ENCODE measurements at regions of chrX and their contacts with region 1.

Region 1: GRCh38 chrX:136496770-136497598 is at the start of gene HTATSF1:
- DNase-seq: peak; percentile 93
- H3K4me3 Mint-ChIP-seq: peak within 1 kb of the TSS; percentile 90
- H3K27ac Mint-ChIP-seq: peak within 1 kb of the TSS; percentile 94
- H3K4me1 Mint-ChIP-seq: peaks cover 18% of the 10 kb centered on the region
- H3K27me3 Mint-ChIP-seq: no peaks in the 10 kb centered on the region
- total RNA-seq, gene HTATSF1: 38.9 to 40.4 TPM

Region 2: DNA sequence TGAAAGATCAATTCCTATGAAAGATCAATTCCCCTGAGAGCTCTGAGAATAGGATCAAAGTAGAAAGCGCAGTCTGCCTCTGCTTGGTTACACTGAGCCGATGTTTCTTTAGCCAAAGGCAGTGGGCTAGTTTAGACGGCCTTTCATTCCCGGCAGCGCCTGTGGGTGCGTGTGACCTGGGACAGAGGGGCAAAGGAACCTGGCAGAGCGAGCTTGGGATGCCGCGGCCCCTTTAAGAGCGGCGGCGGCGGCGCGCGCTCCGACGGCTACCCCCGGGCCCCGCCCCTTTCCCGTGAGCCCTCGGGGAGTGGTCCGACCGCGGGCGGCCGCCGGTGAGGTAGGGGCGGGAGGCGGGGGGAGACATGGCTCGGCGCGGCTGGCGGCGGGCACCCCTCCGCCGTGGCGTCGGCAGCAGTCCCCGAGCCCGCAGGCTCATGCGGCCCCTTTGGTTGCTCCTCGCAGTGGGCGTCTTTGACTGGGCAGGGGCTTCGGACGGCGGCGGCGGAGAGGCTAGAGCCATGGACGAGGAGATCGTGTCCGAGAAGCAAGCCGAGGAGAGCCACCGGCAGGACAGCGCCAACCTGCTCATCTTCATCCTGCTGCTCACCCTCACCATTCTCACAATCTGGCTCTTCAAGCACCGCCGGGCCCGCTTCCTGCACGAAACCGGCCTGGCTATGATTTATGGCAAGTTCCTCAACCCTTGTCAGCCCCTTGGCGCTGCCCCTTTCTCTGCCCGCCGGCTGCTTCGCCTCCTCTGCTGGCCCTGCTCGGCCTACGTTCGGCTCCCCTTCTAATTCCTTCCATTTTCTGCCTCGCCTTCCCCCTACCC is 511.6 kb before region 1 on chrX and contains the start of gene SLC9A6:
- CTCF ChIA-PET with region 1: no interaction called
- intact Hi-C with region 1: loop called (anchors 1 kb)
- DNase-seq: peak; percentile 63
- H3K4me3 Mint-ChIP-seq: peak within 1 kb of the TSS; percentile 85
- H3K27ac Mint-ChIP-seq: peak within 1 kb of the TSS; percentile 77
- H3K4me1 Mint-ChIP-seq: peaks cover 50% of the 10 kb centered on the region
- H3K27me3 Mint-ChIP-seq: no peaks in the 10 kb centered on the region
- total RNA-seq, gene SLC9A6: 9.7 to 10.0 TPM

Region 3: DNA sequence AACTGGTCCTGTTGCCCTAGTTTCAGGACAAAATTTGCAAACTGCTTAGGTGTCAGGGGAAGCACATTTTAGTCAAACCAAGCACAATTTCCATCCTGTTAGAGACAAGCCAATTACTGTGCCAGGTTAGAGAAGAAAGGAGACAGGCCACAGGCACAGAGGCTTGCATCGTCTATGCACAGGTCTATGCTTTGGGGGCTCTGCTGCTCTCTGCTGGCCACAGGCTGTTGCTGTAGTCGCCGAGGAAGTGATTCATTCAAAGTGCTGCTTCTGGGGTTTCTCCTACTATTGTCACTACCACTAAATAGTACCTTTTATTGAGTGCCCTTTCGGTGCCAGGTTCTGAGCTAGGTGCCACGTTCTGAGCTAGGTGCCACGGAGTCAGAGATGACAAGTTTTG is 80.6 kb after region 1 on chrX:
- CTCF ChIA-PET with region 1: no interaction called
- intact Hi-C with region 1: loop called (anchors 1 kb)
- DNase-seq: peak; percentile 82
- H3K4me3 Mint-ChIP-seq: peak overlapping the region; percentile 4
- H3K27ac Mint-ChIP-seq: peak overlapping the region; percentile 23
- H3K4me1 Mint-ChIP-seq: peaks cover 37% of the 10 kb centered on the region
- H3K27me3 Mint-ChIP-seq: no peaks in the 10 kb centered on the region

Region 4: DNA sequence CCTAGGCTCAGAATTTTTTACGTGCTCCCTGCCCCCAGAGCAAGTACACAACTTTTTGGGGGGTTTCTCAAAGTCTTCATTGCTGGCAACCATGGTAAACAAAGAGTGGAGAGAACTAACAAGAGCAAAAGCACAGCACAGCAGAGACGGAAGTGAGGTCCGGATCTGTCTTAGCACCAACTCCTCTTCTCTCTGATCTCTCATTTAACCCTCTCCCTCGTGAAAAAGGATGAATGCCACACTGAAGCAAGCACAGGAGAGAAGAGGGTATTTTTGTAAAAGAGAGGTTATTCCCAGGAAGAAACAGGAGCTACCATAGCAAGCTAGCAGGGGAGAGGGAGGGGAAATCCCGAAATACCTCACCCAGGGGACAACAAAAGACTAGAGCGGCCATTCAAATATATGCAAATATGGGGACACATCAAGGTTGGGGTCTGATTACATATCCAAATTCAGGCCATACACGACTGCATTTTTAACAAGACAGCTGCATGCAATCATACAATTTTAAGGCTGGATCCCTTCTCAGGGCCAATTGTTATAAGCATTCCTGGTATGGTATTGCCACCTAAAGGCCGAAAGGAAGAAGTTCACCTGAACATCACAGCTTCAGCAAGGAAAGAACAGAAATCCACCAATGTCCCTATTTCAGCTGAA is 197.6 kb after region 1 on chrX:
- CTCF ChIA-PET with region 1: no interaction called
- intact Hi-C with region 1: loop called (anchors 2 kb)
- DNase-seq: peak; percentile 45
- H3K4me3 Mint-ChIP-seq: peak overlapping the region; percentile 76
- H3K27ac Mint-ChIP-seq: peak overlapping the region; percentile 99
- H3K4me1 Mint-ChIP-seq: peaks cover 73% of the 10 kb centered on the region
- H3K27me3 Mint-ChIP-seq: no peaks in the 10 kb centered on the region

Region 5: GRCh38 chrX:136880452-136881013 is 383.5 kb after region 1 on chrX and contains the start of gene RBMX:
- CTCF ChIA-PET with region 1: no interaction called
- intact Hi-C with region 1: loop called (anchors 1 kb)
- DNase-seq: peak; percentile 94
- H3K4me3 Mint-ChIP-seq: peak within 1 kb of the TSS; percentile 97
- H3K27ac Mint-ChIP-seq: peak within 1 kb of the TSS; percentile 98
- H3K4me1 Mint-ChIP-seq: peaks cover 24% of the 10 kb centered on the region
- H3K27me3 Mint-ChIP-seq: no peaks in the 10 kb centered on the region
- total RNA-seq, gene RBMX: 278 to 280 TPM

Region 6: GRCh38 chrX:137031517-137032340 is 534.7 kb after region 1 on chrX:
- CTCF ChIA-PET with region 1: no interaction called
- intact Hi-C with region 1: loop called (anchors 5 kb)
- DNase-seq: peak; percentile 62
- H3K4me3 Mint-ChIP-seq: no peak overlapping the region
- H3K27ac Mint-ChIP-seq: no peak overlapping the region
- H3K4me1 Mint-ChIP-seq: peaks cover 7% of the 10 kb centered on the region
- H3K27me3 Mint-ChIP-seq: peaks cover 42% of the 10 kb centered on the region

Region 7: DNA sequence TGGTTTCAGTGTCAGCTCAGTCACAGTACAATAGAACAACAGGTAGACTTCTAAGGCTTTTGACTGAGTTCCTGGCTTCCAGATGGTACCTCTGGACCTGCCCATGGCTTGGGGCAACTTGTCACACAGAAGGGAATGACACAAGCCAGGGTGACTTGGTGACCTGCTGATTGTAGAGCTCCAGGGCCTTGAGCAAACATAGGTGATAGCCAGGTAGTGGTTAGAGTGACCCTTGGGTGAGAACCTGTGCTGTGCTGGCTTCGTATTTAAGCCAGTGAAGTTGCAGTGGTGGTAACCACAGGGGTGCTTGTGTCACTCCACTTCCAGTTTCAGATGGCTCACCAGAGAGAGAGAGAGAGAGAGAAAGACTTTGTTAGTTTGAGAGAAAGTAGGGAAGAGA is 1540.5 kb after region 1 on chrX:
- CTCF ChIA-PET with region 1: no interaction called
- intact Hi-C with region 1: no loop called
- DNase-seq: no peak
- H3K4me3 Mint-ChIP-seq: no peak overlapping the region
- H3K27ac Mint-ChIP-seq: no peak overlapping the region
- H3K4me1 Mint-ChIP-seq: no peaks in the 10 kb centered on the region
- H3K27me3 Mint-ChIP-seq: no peaks in the 10 kb centered on the region

Measured in activated naive CD4-positive, alpha-beta T cell treated with anti-CD3 and anti-CD28 coated beads for 36 hours (primary cell).